ENCODE measurements at regions of chr10 and their contacts with region 1.

Region 1: GRCh38 chr10:38118072-38118807 is 24.1 kb downstream of the ZNF37A start:
- DNase-seq: peak; percentile 11
- H3K4me3 ChIP-seq: no peak overlapping the region
- H3K27ac ChIP-seq: no peak overlapping the region
- H3K4me1 ChIP-seq: no peaks in the 10 kb centered on the region
- H3K27me3 ChIP-seq: no peaks in the 10 kb centered on the region
- CTCF ChIP-seq: no peak
- POLR2A ChIP-seq: no peak

Region 2: DNA sequence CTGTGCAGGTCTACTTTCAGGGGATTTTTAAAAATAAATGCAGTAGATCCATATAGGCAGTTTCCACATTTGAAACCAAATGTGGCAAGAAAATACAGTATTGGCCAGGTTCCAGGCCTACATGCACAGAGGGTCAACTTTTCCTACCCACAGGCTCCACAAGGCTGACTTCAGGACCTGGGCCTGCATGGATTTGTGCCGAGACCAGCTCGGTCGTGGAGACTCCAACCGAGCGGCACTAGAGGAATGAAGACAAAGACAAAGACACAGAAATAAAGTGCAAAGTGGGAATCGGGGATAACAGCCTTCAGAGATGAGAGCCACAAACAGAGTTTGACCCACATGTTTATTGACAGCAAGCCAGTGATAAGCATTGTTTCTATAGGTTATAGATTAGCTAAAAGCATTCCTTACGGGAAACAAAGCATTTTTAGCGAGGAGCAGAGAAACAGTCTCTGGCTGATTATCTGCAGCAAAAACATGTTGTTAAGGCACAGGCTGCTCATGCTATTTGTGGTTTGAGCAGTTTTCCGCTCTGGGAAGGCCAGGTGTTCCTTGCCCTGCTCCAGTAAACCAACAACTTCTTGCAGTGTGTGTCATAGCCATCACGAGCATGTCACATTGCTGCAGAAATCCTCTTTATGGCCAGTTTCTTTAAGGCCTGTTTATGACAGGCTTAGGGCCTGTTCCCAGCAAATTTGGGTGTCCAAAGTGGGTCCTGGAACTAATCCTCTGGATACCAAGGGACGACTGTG is 28.5 kb after region 1 on chr10:
- CTCF ChIA-PET with region 1: no interaction called
- POLR2A ChIA-PET with region 1: no interaction called
- dilution Hi-C with region 1: no loop called
- intact Hi-C with region 1: no loop called
- DNase-seq: no peak
- H3K4me3 ChIP-seq: no peak overlapping the region
- H3K27ac ChIP-seq: no peak overlapping the region
- H3K4me1 ChIP-seq: no peaks in the 10 kb centered on the region
- H3K27me3 ChIP-seq: no peaks in the 10 kb centered on the region
- CTCF ChIP-seq: no peak
- POLR2A ChIP-seq: no peak

Region 3: GRCh38 chr10:38174341-38174740 is 56.1 kb after region 1 on chr10:
- CTCF ChIA-PET with region 1: no interaction called
- POLR2A ChIA-PET with region 1: no interaction called
- dilution Hi-C with region 1: no loop called
- intact Hi-C with region 1: loop called (anchors 2 kb)
- DNase-seq: no peak
- H3K4me3 ChIP-seq: no peak overlapping the region
- H3K27ac ChIP-seq: no peak overlapping the region
- H3K4me1 ChIP-seq: no peaks in the 10 kb centered on the region
- H3K27me3 ChIP-seq: no peaks in the 10 kb centered on the region
- CTCF ChIP-seq: no peak
- POLR2A ChIP-seq: no peak

Measured in endothelial cell of umbilical vein (primary cell).